B cell (primary cell): ENCODE measurements at regions of chr15 and their contacts with region 1.

Region 1: DNA sequence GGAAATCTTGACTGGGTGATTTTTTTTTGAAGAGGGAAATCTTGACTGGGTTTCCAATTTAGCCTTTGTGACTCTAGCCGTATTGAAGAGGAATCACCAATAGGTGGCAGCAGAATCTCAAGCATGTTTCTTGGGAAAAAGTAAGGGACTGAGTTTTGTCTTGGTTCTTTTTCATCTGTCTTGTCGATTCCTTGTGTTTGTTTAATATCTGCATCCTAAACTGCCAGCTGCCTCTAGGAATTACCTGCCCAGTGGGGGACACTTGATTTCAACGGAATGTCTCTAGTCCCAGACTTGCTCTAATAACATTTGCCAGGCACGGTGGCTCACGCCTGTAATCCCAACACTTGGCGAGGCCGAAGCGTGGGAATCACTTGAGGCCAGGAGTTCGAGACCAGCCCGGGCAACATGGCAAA is 89.2 kb downstream of the RBPMS2 start:
- DNase-seq: peak; percentile 68
- ATAC-seq: no peak
- H3K4me3 ChIP-seq: no peak overlapping the region
- H3K4me3 Mint-ChIP-seq: no peak overlapping the region
- H3K27ac ChIP-seq: no peak overlapping the region
- H3K27ac Mint-ChIP-seq: no peak overlapping the region
- H3K4me1 ChIP-seq: no peaks in the 10 kb centered on the region
- H3K4me1 Mint-ChIP-seq: no peaks in the 10 kb centered on the region
- H3K27me3 ChIP-seq: no peaks in the 10 kb centered on the region
- H3K27me3 Mint-ChIP-seq: no peaks in the 10 kb centered on the region
- CTCF ChIP-seq: peak; percentile 78

Region 2: GRCh38 chr15:64702816-64703646 is 16.8 kb after region 1 on chr15:
- CTCF ChIA-PET with region 1: interaction called, 84 read pairs
- POLR2A ChIA-PET with region 1: no interaction called
- intact Hi-C with region 1: no loop called
- DNase-seq: peak; percentile 93
- ATAC-seq: peak; percentile 96
- H3K4me3 ChIP-seq: peak overlapping the region; percentile 73 to 88 (median 87)
- H3K4me3 Mint-ChIP-seq: peak overlapping the region; percentile 95
- H3K27ac ChIP-seq: peak overlapping the region; percentile 65 to 83
- H3K27ac Mint-ChIP-seq: peak overlapping the region; percentile 94
- H3K4me1 ChIP-seq: peaks cover 45 to 46% of the 10 kb centered on the region in 2 donors
- H3K4me1 Mint-ChIP-seq: peaks cover 56% of the 10 kb centered on the region
- H3K27me3 ChIP-seq: no peaks in the 10 kb centered on the region
- H3K27me3 Mint-ChIP-seq: no peaks in the 10 kb centered on the region
- CTCF ChIP-seq: no peak

Region 3: GRCh38 chr15:64710664-64711428 is 24.6 kb after region 1 on chr15:
- CTCF ChIA-PET with region 1: interaction called, 19 read pairs
- POLR2A ChIA-PET with region 1: no interaction called
- intact Hi-C with region 1: no loop called
- DNase-seq: no peak
- ATAC-seq: no peak
- H3K4me3 ChIP-seq: no peak overlapping the region
- H3K4me3 Mint-ChIP-seq: no peak overlapping the region
- H3K27ac ChIP-seq: no peak overlapping the region
- H3K27ac Mint-ChIP-seq: no peak overlapping the region
- H3K4me1 ChIP-seq: no peaks in the 10 kb centered on the region
- H3K4me1 Mint-ChIP-seq: no peaks in the 10 kb centered on the region
- H3K27me3 ChIP-seq: no peaks in the 10 kb centered on the region
- H3K27me3 Mint-ChIP-seq: no peaks in the 10 kb centered on the region
- CTCF ChIP-seq: no peak

Region 4: GRCh38 chr15:64720188-64720587 is 34.0 kb after region 1 on chr15:
- CTCF ChIA-PET with region 1: interaction called, 549 read pairs
- POLR2A ChIA-PET with region 1: no interaction called
- intact Hi-C with region 1: no loop called
- DNase-seq: no peak
- ATAC-seq: no peak
- H3K4me3 ChIP-seq: no peak overlapping the region
- H3K4me3 Mint-ChIP-seq: no peak overlapping the region
- H3K27ac ChIP-seq: no peak overlapping the region
- H3K27ac Mint-ChIP-seq: no peak overlapping the region
- H3K4me1 ChIP-seq: no peaks in the 10 kb centered on the region
- H3K4me1 Mint-ChIP-seq: no peaks in the 10 kb centered on the region
- H3K27me3 ChIP-seq: no peaks in the 10 kb centered on the region
- H3K27me3 Mint-ChIP-seq: no peaks in the 10 kb centered on the region
- CTCF ChIP-seq: no peak

Region 5: GRCh38 chr15:64851503-64851840 is 165.2 kb after region 1 on chr15:
- CTCF ChIA-PET with region 1: no interaction called
- POLR2A ChIA-PET with region 1: no interaction called
- intact Hi-C with region 1: no loop called
- DNase-seq: no peak
- ATAC-seq: no peak
- H3K4me3 ChIP-seq: no peak overlapping the region
- H3K4me3 Mint-ChIP-seq: no peak overlapping the region
- H3K27ac ChIP-seq: no peak overlapping the region
- H3K27ac Mint-ChIP-seq: peak overlapping the region; percentile 73
- H3K4me1 ChIP-seq: peaks cover 29 to 40% of the 10 kb centered on the region in 2 donors
- H3K4me1 Mint-ChIP-seq: peaks cover 63% of the 10 kb centered on the region
- H3K27me3 ChIP-seq: no peaks in the 10 kb centered on the region
- H3K27me3 Mint-ChIP-seq: no peaks in the 10 kb centered on the region
- CTCF ChIP-seq: no peak

Region 6: DNA sequence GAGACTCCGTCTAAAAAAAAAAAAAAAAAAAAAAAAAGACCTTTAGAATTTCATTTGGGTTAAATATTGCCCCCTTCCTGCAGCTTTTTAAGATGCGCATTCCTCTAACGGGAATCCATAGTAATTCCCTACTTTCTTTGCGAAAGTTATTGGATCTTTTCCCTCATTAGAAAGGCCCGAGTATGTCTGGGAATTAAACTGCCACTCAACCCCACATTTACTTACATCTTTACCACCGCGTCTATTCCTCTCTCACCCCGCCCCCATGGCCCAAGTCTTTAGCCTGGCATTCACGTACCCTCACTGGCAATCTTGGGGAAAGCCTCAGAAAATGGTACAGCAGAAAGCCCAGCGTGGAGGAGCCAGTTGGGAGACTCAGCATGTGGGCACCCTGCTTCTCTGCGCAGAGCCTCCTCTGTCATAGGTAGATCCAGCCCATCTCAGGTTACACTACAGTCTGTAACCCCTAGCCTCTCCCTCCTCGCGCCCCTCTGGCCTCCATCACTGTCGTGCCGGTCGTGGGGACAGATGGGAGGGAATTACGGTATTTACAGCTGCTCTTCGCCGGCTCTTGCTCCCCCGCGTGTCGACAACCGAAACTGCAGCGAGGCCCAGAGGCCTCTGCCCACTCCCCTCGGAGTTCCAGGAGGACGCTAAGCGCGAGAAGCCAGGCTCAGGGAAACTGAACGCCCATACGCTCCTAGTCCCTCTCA is 219.1 kb after region 1 on chr15:
- CTCF ChIA-PET with region 1: interaction called, 6 read pairs
- POLR2A ChIA-PET with region 1: interaction called, 3 read pairs
- intact Hi-C with region 1: loop called (anchors 5 kb)
- DNase-seq: peak; percentile 85
- ATAC-seq: peak; percentile 95
- H3K4me3 ChIP-seq: peak overlapping the region; percentile 19 to 61 (median 44)
- H3K4me3 Mint-ChIP-seq: peak overlapping the region; percentile 84
- H3K27ac ChIP-seq: no peak overlapping the region
- H3K27ac Mint-ChIP-seq: peak overlapping the region; percentile 77
- H3K4me1 ChIP-seq: peaks cover 21 to 24% of the 10 kb centered on the region in 2 donors
- H3K4me1 Mint-ChIP-seq: peaks cover 36% of the 10 kb centered on the region
- H3K27me3 ChIP-seq: peaks cover 0 to 7% (median 0%) of the 10 kb centered on the region in 4 experiments
- H3K27me3 Mint-ChIP-seq: peaks cover 4% of the 10 kb centered on the region
- CTCF ChIP-seq: peak; percentile 86

Region 7: GRCh38 chr15:65146438-65146837 is 460.2 kb after region 1 on chr15:
- CTCF ChIA-PET with region 1: no interaction called
- POLR2A ChIA-PET with region 1: no interaction called
- intact Hi-C with region 1: no loop called
- DNase-seq: no peak
- ATAC-seq: no peak
- H3K4me3 ChIP-seq: no peak overlapping the region
- H3K4me3 Mint-ChIP-seq: no peak overlapping the region
- H3K27ac ChIP-seq: no peak overlapping the region
- H3K27ac Mint-ChIP-seq: no peak overlapping the region
- H3K4me1 ChIP-seq: no peaks in the 10 kb centered on the region
- H3K4me1 Mint-ChIP-seq: no peaks in the 10 kb centered on the region
- H3K27me3 ChIP-seq: no peaks in the 10 kb centered on the region
- H3K27me3 Mint-ChIP-seq: no peaks in the 10 kb centered on the region
- CTCF ChIP-seq: no peak